ENCODE measurements at regions of chr1 and their contacts with region 1.

Region 1: GRCh38 chr1:28359592-28360239 is 9.8 kb upstream of the PHACTR4 start:
- DNase-seq: peak; percentile 40
- H3K4me3 ChIP-seq: no peak overlapping the region
- H3K27ac ChIP-seq: no peak overlapping the region
- H3K4me1 ChIP-seq: peaks cover under 1% of the 10 kb centered on the region
- H3K27me3 ChIP-seq: no peaks in the 10 kb centered on the region
- CTCF ChIP-seq: peak; percentile 65 to 78

Region 2: DNA sequence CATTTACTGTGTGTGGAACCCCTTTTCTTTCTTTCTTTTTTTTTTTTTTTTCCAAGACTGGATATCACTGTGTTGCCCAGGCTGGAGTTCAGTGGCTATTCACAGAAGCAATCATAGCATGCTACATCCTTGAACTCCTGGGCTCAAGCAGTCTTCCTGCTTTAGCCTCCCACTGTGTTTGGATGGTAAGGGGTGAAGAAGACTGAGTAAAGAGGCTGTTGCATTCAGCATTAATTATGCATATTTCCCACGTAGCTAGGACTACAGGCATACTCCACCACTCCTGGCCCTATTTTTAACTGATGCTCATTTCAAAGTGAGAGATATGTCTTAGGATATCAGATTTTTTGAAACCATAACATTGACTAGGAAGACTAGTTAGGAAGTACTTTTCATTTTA is 49.4 kb after region 1 on chr1:
- CTCF ChIA-PET with region 1: interaction called, 14 read pairs
- dilution Hi-C with region 1: no loop called
- in situ Hi-C with region 1: no loop called
- intact Hi-C with region 1: loop called (anchors 2 kb)
- DNase-seq: no peak
- H3K4me3 ChIP-seq: no peak overlapping the region
- H3K27ac ChIP-seq: no peak overlapping the region
- H3K4me1 ChIP-seq: no peaks in the 10 kb centered on the region
- H3K27me3 ChIP-seq: no peaks in the 10 kb centered on the region
- CTCF ChIP-seq: no peak

Region 3: DNA sequence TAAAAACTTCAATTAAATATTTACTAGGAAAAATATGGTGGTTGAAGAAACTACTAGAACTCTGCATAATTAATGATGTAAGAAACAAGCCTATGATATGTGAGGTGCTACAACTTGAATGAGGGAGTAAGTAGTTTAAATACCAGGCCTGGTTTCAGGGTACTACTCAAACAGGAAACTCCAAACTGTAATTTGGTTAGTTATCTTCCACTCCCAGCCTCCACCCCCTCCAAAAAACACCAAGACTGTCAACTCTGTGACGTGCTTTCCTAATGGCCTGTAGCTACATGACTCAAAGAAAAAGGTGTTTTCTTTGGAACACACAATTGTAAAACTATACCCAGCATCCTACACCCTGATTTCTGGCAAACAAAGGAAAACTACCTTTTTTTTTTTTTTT is 90.2 kb after region 1 on chr1:
- CTCF ChIA-PET with region 1: no interaction called
- dilution Hi-C with region 1: loop called (anchors 5 kb)
- in situ Hi-C with region 1: no loop called
- intact Hi-C with region 1: no loop called
- DNase-seq: peak; percentile 96
- H3K4me3 ChIP-seq: no peak overlapping the region
- H3K27ac ChIP-seq: peak overlapping the region; percentile 75
- H3K4me1 ChIP-seq: peaks cover 24% of the 10 kb centered on the region
- H3K27me3 ChIP-seq: no peaks in the 10 kb centered on the region
- CTCF ChIP-seq: no peak

Region 4: GRCh38 chr1:28470146-28470545 is 110.4 kb after region 1 on chr1:
- CTCF ChIA-PET with region 1: interaction called, 3 read pairs
- dilution Hi-C with region 1: no loop called
- in situ Hi-C with region 1: no loop called
- intact Hi-C with region 1: loop called (anchors 1 kb)
- DNase-seq: no peak
- H3K4me3 ChIP-seq: no peak overlapping the region
- H3K27ac ChIP-seq: no peak overlapping the region
- H3K4me1 ChIP-seq: no peaks in the 10 kb centered on the region
- H3K27me3 ChIP-seq: no peaks in the 10 kb centered on the region
- CTCF ChIP-seq: no peak

Region 5: DNA sequence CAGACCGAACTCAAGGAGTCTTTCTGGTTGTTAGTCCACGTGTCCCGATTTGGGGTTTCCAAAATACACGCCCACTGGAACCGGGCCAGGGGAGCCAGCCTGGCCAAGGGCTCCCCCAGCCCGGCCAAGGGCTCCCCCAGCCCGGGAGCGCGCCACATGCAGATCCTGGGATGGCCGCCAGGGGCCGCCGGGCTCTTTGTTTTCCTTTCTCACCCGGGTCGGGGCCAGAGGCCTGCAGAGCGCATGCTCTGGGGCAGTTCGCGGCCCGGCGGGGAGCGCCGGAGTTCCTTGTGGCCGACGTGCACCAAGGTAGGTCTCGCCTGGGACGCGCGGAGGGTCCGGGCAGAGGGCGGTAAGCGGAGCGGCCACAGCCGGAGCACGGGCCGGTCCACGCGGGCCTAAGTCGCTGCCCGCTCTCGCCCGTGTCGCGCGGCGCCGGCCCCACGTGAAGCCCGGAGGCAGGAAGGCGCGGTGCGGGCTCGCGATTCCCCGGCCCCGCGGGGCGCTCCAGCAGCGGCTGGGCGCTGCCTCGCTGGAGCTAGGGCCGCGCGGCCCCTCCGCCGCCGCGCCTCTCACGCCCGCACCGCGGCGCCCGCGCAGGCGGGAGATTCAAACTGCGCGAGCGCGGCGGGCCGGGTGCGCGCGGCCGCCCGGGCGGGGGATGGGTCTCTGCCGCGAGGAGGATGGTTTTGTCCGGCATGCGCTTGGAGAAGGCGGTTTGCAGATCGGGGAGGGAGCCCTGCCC is 158.5 kb after region 1 on chr1:
- CTCF ChIA-PET with region 1: interaction called, 14 read pairs
- dilution Hi-C with region 1: no loop called
- in situ Hi-C with region 1: no loop called
- intact Hi-C with region 1: loop called (anchors 2 kb)
- DNase-seq: peak; percentile 85
- H3K4me3 ChIP-seq: peak overlapping the region; percentile 60 to 68 (median 61)
- H3K27ac ChIP-seq: peak overlapping the region; percentile 57
- H3K4me1 ChIP-seq: peaks cover 12% of the 10 kb centered on the region
- H3K27me3 ChIP-seq: no peaks in the 10 kb centered on the region
- CTCF ChIP-seq: peak; percentile 63 to 98

Region 6: GRCh38 chr1:28877132-28877781 is 517.5 kb after region 1 on chr1:
- CTCF ChIA-PET with region 1: no interaction called
- dilution Hi-C with region 1: no loop called
- in situ Hi-C with region 1: no loop called
- intact Hi-C with region 1: loop called (anchors 5 kb)
- DNase-seq: peak; percentile 72
- H3K4me3 ChIP-seq: no peak overlapping the region
- H3K27ac ChIP-seq: no peak overlapping the region
- H3K4me1 ChIP-seq: peaks cover 6% of the 10 kb centered on the region
- H3K27me3 ChIP-seq: no peaks in the 10 kb centered on the region
- CTCF ChIP-seq: peak; percentile 91 to 94

Measured in mammary epithelial cell (primary cell).